ENCODE measurements at regions of chr15 and their contacts with region 1.

Region 1: DNA sequence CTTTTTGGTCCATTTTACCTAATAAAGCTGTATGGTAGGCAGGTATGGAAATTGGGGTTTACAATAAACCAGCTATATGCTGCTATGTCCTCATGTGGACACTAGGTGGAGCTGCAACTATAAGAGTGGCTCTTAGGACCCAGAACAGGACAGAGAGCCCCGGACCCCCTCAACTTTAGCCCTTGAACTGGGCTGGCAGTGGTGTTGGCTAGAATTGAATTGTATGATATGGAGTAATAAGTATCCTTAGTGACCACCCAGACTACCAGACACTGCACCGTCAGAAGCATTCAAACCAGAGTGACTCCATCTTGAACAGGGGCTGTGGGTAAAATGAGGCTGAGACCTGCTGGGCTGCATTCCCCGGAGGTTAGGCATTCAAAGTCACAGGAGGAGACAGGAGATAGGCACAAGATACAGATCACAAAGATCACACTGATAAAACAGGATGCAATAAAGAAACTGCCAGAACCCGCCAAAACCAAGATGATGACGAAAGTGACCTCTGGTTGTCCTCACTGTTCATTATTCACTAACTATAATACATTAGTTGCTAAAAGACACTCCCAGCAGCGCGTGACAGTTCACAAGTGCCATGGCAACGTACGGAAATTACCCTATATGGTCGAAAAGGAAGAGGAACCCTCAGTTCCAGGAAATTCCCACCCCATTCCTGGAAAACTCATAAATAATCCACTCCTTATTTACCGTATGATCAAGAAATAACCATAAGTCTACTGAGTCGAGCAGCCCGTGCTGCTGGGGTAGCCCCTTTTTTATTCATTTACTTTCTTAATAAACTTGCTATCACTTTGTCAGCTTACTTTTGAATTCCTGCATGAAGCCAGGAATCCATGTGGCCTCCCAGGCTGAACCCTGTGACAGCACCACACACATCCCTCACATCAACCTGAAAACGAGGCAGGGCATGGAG is 68.7 kb upstream of the BLM start:
- DNase-seq: peak; percentile 37 to 82
- ATAC-seq: peak; percentile 66 to 91 (median 84)
- H3K4me3 ChIP-seq: peak overlapping the region in 3 of 10 donors; percentile 12 to 17 (median 14)
- H3K27ac ChIP-seq: peak overlapping the region in 9 of 10 donors; percentile 31 to 84 (median 65)
- H3K4me1 ChIP-seq: peaks cover 0 to 29% (median 20%) of the 10 kb centered on the region in 9 donors
- H3K27me3 ChIP-seq: no peaks in the 10 kb centered on the region
- CTCF ChIP-seq: peak; percentile 87 to 96 (median 92)

Region 2: DNA sequence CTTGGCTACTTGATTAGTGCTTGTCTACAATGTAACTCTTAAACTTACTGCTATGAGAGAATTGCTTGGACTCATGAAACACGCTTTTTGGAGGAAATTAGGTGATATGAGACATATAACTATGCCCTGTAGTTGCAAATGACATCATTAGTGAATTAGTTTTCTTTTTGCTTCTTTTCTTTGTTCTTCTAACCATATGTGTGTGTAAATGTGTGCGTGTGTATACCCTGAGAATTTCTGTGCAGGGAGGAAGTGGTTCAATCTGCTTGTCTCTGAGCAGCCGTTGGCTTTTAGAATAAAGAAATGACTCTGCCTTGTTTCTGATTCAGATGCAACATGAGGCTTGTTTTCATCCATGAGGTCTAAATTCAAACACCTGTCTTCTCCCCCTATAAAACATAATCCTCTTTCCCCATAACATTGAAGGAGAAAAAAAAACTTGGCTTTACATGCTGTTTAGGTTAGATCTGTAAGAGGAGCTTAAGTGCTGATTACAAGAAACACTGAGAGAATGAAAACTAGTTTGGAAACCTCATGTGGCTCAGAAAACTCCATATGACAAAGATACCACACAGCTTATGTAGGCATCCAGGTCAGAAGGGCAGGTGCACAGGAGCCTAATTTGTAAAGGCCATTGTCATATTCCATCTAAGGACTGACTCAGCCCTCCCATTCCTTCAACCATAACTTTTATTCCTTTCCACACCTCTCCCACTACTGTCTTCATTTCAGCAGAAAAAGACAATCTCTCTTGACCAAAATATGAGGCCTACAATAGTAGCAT is 38.2 kb after region 1 on chr15:
- intact Hi-C with region 1: loop called in 6 of 10 experiments (anchors 5 kb)
- DNase-seq: no peak
- ATAC-seq: no peak
- H3K4me3 ChIP-seq: no peak overlapping the region
- H3K27ac ChIP-seq: peak overlapping the region in 1 of 10 donors; percentile 39
- H3K4me1 ChIP-seq: peaks cover 0 to 23% (median 0%) of the 10 kb centered on the region in 9 donors
- H3K27me3 ChIP-seq: no peaks in the 10 kb centered on the region
- CTCF ChIP-seq: no peak

Region 3: DNA sequence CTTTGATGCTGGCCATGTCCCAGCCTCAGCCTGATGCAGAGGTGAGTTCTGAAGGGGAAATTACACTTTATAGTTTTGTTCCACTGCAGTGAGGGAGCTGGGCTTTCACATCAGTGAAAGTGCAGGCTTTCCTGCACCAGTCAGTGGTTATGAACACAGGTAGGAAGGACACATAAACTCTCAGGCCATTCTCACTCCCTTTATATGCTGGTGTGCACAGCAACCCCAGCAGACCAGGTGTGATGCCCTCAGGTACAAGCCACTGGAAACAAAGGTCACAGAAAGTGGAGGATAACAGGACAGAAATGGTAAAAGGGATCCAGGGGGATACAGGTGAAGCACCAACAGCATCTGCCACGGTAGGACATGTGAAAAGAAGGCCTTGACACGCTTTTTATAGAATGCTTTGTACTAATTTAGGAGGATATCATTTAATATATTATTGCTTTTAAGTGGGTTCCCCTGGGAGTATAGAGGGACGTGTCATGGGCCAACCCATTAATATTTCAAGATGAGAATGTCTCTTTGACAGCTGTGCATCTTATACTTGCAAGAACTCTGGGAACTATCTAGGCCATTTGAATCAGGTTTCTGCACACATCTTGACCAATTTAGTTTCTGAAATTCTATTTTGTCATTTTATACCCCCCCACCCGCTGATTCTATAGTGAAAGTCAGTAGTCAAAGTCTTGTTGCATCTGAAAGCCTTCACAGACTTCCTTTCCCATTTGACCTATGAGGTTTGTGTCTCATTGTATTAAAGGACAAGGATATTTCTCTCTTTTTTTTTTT is 43.8 kb after region 1 on chr15:
- intact Hi-C with region 1: loop called in 8 of 10 experiments (anchors 2 to 5 kb)
- DNase-seq: no peak
- ATAC-seq: no peak
- H3K4me3 ChIP-seq: no peak overlapping the region
- H3K27ac ChIP-seq: no peak overlapping the region
- H3K4me1 ChIP-seq: peaks cover 0 to under 1% (median 0%) of the 10 kb centered on the region in 9 donors
- H3K27me3 ChIP-seq: no peaks in the 10 kb centered on the region
- CTCF ChIP-seq: no peak

Region 4: DNA sequence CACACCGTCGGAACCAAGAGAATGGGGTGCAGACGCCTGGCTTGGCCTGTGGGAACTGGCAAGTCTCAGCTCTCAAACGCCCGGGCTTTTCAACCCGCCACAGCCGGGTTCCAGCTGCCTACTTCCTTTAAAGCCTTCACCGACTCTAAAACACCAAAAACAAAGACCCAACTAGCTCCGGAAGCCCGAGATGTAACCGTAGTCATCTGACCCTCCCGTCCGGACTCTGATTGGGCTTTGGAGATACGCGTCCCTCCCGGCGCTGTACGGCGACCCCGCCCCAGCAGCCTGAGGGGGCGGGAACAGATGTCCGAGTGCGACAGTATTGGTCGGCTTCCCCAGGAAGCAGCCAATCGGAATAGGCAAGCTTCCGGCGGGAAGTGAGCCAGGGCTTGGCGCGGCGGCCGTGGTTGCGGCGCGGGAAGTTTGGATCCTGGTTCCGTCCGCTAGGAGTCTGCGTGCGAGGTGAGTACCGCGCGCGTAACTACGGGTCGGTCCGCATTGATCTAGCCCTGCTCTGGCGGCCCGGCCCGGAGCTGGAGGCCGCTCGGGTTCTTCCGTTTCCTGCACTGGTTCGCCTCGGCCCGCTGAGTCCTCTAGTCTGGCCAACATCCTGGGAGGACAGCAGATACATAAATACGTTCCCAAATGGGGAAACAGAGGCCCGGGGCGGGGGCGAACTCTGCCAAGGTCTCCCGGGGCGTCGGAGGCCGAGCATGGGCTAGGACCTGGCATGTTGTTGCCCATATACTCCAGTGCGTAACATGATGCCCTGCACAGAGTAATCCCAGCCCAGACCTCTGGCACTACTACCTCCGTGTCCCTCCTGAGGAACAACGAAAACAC is 68.8 kb after region 1 on chr15 and contains the start of gene BLM:
- intact Hi-C with region 1: loop called in 2 of 10 experiments (anchors 1 to 5 kb)
- DNase-seq: peak; percentile 95
- ATAC-seq: peak; percentile 100
- H3K4me3 ChIP-seq: peak within 1 kb of the TSS; percentile 35 to 76 (median 70)
- H3K27ac ChIP-seq: peak within 1 kb of the TSS; percentile 74 to 96 (median 88)
- H3K4me1 ChIP-seq: peaks cover 2 to 18% (median 14%) of the 10 kb centered on the region in 9 donors
- H3K27me3 ChIP-seq: no peaks in the 10 kb centered on the region
- CTCF ChIP-seq: peak in 8 of 9 donors; percentile 27 to 58 (median 48)
- total RNA-seq, gene BLM: 3.5 to 35.0 (median 7.9) TPM

Region 5: DNA sequence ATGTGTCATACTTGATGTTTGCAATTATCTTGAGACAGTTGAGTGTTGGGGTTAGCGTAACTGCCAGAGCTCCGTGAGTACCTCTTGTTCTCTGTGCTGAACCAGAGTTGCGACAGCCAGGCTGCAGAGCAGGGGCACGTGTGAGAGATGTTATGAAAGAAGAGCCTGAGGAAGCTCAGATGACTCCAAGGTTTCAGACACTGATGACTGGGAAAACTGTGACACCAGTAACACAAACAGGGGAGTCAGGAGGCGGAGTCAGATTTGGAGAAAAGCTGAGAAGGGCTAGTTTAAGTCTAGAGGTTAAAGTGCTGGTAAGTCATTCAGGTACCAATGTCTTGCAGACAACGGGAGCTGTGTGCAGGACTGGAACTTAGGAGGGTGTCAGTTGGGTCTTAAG is 113.7 kb after region 1 on chr15:
- intact Hi-C with region 1: no loop called
- DNase-seq: peak; percentile 43 to 57
- ATAC-seq: peak; percentile 72 to 99 (median 93)
- H3K4me3 ChIP-seq: peak overlapping the region in 4 of 10 donors; percentile 3 to 22 (median 11)
- H3K27ac ChIP-seq: peak overlapping the region; percentile 68 to 83 (median 72)
- H3K4me1 ChIP-seq: peaks cover 0 to 55% (median 25%) of the 10 kb centered on the region in 9 donors
- H3K27me3 ChIP-seq: no peaks in the 10 kb centered on the region
- CTCF ChIP-seq: no peak

Region 6: DNA sequence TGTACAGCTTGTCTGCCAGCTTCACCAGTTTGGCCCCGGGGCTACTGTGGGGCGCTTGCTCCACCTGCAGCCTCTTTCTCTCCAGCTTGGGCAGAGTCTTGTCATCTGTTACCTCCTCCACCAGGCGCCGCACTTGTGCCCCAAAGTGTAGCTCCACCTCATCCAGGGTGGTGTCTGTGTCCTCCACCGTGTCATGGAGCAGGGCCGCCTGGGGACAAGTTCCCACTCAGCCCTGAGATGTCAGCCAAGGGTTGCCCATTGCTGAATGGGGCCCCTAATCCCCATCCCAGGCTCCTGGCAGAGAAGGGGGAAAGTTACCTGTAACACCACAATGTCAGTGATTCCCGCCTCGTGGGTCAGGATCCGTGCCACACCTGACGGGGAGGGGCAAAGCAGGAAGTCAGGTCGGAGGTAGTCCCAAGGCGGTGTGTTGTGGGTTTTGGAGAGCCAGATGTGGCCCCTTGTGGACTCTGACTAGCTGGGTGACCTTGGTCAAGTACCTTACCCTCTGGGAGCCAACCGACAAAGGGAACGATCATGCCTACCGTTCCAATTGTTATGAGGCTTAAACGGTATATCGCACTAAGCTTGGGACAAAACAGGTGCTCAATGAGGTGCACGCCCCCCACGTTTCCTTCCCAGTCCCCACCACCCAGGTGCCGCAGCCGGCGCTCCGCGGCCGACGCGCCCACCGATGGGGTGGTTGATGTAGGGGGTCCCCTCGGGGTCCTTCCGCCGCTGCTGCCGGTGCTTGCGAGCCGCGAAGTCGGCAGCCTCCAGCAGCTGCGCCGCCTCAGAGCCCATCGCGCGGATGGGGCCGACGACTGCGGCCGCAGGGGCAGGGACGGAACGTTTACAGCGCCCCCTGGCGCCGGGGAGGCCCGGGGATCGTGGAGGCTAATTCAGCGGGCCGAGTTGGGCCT is 283.6 kb after region 1 on chr15 and contains the start of gene HDDC3:
- intact Hi-C with region 1: loop called in 5 of 10 experiments (anchors 2 to 5 kb)
- DNase-seq: peak; percentile 93 to 95
- ATAC-seq: peak; percentile 58 to 74 (median 66)
- H3K4me3 ChIP-seq: peak within 1 kb of the TSS; percentile 49 to 92 (median 78)
- H3K27ac ChIP-seq: peak within 1 kb of the TSS; percentile 81 to 98 (median 96)
- H3K4me1 ChIP-seq: peaks cover 18 to 74% (median 53%) of the 10 kb centered on the region in 9 donors
- H3K27me3 ChIP-seq: no peaks in the 10 kb centered on the region
- CTCF ChIP-seq: peak; percentile 92 to 99 (median 97)
- total RNA-seq, gene HDDC3: 10.7 to 18.2 (median 14.6) TPM